ENCODE measurements at regions of chr6 and their contacts with region 1.

Region 1: DNA sequence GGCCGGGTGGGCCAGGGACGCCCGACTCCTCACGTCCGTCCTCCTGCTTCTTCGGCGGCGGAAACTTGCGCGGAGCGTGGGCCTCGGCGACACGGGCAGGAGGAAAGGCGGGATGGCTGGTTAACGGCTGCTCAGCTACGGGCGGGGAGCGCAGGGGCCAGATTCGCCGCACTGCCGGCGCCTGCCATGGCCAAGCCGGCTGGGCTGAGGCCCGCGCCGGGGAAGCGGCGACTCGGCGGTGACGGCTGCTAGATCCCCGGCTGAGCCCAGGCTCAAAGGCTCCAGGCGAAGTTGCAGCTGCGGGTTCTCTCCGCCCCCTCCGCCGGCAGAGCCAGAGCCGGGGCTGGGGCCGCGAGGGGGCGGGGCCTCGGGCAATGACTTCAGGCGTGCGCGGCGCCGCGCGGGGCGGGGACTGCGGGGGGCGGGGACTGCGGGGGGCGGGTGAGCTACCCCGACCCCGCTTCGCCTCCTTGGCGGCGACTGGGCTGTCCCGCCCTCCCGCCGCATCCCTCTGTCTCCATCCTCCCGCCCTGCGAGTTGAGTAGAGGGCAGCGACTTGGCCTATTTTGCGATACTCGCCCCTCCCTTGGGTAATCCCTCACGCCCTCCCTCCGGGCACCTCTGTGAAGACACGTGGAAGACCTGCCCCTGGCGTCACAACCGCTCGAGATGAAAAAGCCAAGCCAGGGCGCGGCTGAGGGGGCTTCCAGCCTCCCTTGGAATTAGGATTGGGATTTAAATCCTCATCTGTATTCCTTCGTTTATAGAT is at the start of gene CEP85L:
- DNase-seq: peak; percentile 92 to 95 (median 94)
- H3K4me3 ChIP-seq: peak within 1 kb of the TSS; percentile 66 to 100 (median 78)
- H3K27ac ChIP-seq: peak within 1 kb of the TSS; percentile 82 to 99 (median 95)
- H3K4me1 ChIP-seq: peaks cover 10 to 32% of the 10 kb centered on the region in 2 donors
- H3K27me3 ChIP-seq: no peaks in the 10 kb centered on the region
- CTCF ChIP-seq: peak in 3 of 6 experiments; percentile 20 to 42 (median 25)
- POLR2A ChIP-seq: peak; percentile 80 to 98
- total RNA-seq, gene CEP85L: 14.6 to 74.3 (median 29.0) TPM

Region 2: GRCh38 chr6:118709859-118710350 is 58.4 kb after region 1 on chr6:
- intact Hi-C with region 1: loop called in 1 of 2 experiments (anchors 10 kb)
- DNase-seq: peak in 5 of 7 donors; percentile 33 to 57 (median 40)
- H3K4me3 ChIP-seq: peak overlapping the region in 1 of 4 donors; percentile 52
- H3K27ac ChIP-seq: peak overlapping the region; percentile 87 to 95 (median 90)
- H3K4me1 ChIP-seq: peaks cover 20 to 36% of the 10 kb centered on the region in 2 donors
- H3K27me3 ChIP-seq: no peaks in the 10 kb centered on the region
- CTCF ChIP-seq: no peak
- POLR2A ChIP-seq: peak in 1 of 2 donors; percentile 15

Measured in adrenal gland (tissue), 19 donors.